Prostate gland (tissue), 2 donors: ENCODE measurements at regions of chr10 and their contacts with region 1.

Region 1: DNA sequence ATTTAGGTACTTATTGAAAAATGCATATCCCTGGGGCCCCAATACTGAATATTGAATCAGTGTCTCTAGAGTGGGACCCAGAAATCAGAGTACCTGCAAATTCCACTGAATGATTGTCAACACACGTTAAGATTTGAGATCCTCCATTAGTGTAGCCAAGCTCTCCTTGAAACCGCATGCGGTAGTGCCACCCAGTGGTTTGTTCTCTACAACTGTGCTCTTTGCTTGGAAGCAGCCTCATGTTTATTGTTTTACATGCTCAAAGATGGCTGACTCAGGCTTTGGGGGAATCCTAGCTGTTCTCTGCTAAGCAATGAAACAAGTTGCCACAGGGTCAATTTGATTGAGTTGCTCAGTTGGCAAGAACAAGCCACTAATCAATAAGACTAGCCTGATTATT is 340.2 kb upstream of the CELF2 start:
- DNase-seq: peak; percentile 35
- H3K4me3 ChIP-seq: no peak overlapping the region
- H3K27ac ChIP-seq: no peak overlapping the region
- H3K4me1 ChIP-seq: no peaks in the 10 kb centered on the region
- H3K27me3 ChIP-seq: no peaks in the 10 kb centered on the region
- CTCF ChIP-seq: peak in 3 of 4 experiments; percentile 36 to 59 (median 50)
- POLR2A ChIP-seq: no peak

Region 2: GRCh38 chr10:9342885-9343570 is 1334.5 kb before region 1 on chr10:
- intact Hi-C with region 1: loop called (anchors 5 kb)
- DNase-seq: no peak
- H3K4me3 ChIP-seq: no peak overlapping the region
- H3K27ac ChIP-seq: no peak overlapping the region
- H3K4me1 ChIP-seq: no peaks in the 10 kb centered on the region
- H3K27me3 ChIP-seq: no peaks in the 10 kb centered on the region
- CTCF ChIP-seq: peak in 2 of 4 experiments; percentile 32 to 63
- POLR2A ChIP-seq: no peak

Region 3: DNA sequence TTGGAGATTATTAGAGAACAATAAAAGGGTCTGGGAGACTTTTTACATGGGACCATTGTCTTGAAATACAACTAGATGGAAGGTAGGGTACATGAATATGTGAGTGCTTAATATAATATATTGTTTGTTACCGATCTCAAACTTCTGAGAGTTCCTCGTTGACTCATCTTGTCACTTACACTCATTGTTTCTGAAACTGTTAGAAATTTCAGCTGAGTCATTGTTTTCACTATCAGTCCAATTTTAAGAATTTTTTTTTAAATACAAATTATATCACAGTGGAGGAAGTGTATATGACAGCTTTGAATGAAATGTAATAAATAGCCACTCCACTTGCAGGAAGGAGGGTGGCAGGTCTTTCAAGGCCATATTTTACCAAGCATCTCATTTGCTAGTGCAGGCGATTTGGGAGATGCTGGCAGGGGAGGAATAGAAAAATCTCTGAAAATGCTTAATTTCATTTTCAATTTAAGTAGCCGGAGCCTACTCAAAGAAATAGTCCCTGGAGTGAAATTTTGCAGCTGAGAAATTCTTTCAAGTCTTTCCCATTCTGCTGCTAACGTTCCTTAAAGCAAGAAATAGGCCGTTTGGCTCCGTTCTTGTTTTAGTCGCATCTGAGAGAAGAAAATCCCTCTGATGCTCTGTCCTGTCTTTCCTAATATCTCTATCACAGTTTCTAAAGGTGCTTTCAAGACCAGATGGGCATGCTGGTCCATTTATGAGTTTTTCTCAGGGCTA is 1064.0 kb before region 1 on chr10:
- intact Hi-C with region 1: loop called (anchors 10 kb)
- DNase-seq: no peak
- H3K4me3 ChIP-seq: no peak overlapping the region
- H3K27ac ChIP-seq: no peak overlapping the region
- H3K4me1 ChIP-seq: no peaks in the 10 kb centered on the region
- H3K27me3 ChIP-seq: no peaks in the 10 kb centered on the region
- CTCF ChIP-seq: peak in 1 of 4 experiments; percentile 10
- POLR2A ChIP-seq: no peak

Region 4: DNA sequence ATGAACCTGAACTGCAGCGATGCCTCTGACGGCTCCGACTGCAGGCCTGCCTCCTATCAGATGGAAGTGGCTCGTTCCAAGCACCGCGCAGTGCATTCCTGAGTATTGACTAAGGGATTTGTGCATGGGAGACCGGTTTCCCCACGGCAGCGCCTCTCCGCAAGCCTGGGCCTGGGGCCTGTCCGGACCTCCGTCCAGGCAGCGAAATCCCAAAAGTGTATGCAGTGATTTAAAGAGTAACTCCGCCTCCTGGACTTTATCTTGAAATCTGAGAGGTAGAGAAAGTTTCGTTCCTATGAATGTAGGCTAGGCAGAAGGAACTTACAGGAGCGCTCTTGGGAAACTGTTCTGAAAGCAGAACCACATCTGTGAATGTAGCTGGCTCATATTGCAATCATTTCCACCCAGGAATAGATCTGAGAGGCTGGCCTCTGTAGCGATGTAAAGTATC is 234.0 kb after region 1 on chr10:
- intact Hi-C with region 1: no loop called
- DNase-seq: peak; percentile 66
- H3K4me3 ChIP-seq: peak overlapping the region; percentile 4 to 14
- H3K27ac ChIP-seq: peak overlapping the region; percentile 19 to 39
- H3K4me1 ChIP-seq: no peaks in the 10 kb centered on the region
- H3K27me3 ChIP-seq: no peaks in the 10 kb centered on the region
- CTCF ChIP-seq: no peak
- POLR2A ChIP-seq: no peak